Dorsolateral prefrontal cortex (tissue), 120 donors: ENCODE measurements at regions of chr13 and their contacts with region 1.

Region 1: DNA sequence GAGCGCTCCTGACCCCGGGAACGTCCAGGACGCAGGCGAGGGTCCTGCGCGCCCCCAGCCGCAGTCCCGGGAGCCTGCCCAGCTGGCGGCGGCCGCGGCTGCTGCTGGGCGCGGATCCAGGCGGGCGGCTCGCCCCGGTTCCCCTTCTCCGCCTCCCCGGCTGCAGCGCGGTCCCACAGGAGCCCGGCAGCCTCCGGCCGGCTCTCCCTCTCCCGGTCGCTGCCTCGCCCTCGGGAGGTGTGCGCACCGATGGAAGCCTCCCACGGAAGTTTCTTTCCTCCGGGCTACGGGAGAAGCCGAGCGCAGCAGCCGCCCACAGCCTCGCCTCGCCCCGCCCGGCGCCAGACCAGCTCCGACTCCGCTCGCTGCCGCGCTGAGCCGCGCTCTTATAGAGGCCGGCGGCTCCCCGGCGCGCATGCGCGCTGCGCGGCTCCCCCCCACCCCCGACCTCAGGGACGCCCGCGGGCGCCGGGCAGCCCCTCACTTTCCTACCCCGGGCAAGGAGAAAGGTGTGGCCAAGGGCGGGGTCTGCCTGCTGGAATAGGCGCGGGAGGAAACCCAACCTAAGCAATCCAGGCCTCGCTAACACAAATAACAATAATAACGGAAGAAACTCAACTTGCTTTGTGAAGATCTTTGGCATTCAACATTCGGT is at the start of gene SHISA2:
- DNase-seq: peak in 4 of 10 donors; percentile 36 to 64 (median 46)
- H3K4me3 ChIP-seq: peak within 1 kb of the TSS; percentile 33 to 76 (median 60)
- H3K27ac ChIP-seq: peak within 1 kb of the TSS in 47 of 59 donors; percentile 2 to 86 (median 69)
- H3K27me3 ChIP-seq: peaks cover 0 to 75% (median 34%) of the 10 kb centered on the region in 45 donors
- CTCF ChIP-seq: peak in 1 of 56 donors; percentile 14
- total RNA-seq, gene SHISA2: 0.18 to 7.1 (median 1.4) TPM

Region 2: DNA sequence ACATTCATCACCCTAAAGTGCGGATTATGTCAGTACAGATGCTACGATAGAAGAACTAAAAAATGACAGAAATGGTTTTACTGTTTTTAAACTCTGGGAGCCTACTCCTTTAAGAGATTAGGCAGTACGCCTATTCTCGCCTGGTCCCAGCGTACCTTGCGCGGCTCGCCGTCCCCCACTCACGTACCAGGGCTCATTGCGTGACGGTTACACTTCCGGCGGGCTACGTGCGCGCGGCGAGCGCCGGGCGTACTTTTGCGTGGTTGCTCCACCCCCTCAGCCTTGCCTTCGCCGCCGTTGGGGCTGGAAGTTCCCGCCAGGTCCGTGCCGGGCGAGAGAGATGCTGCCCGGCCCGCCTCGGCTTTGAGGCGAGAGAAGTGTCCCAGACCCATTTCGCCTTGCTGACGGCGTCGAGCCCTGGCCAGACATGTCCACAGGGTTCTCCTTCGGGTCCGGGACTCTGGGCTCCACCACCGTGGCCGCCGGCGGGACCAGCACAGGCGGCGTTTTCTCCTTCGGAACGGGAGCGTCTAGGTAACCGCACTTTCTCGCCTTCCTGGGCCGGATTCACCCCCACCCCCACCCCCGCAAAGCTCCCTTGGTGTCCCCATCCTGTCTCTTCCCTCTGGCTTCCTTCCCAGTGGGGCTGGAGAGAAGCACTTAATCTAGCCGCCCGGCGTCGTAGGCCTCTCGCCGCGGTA is 750.3 kb before region 1 on chr13 and contains the start of gene NUP58:
- intact Hi-C with region 1: loop called in 1 of 2 experiments (anchors 10 kb)
- DNase-seq: peak; percentile 95 to 98 (median 96)
- H3K4me3 ChIP-seq: peak within 1 kb of the TSS; percentile 59 to 99 (median 89)
- H3K27ac ChIP-seq: peak within 1 kb of the TSS; percentile 77 to 98 (median 93)
- H3K27me3 ChIP-seq: no peaks in the 10 kb centered on the region
- CTCF ChIP-seq: peak in 42 of 56 donors; percentile 5 to 65 (median 33)
- total RNA-seq, gene NUP58: 37.0 to 77.1 (median 58.6) TPM

Region 3: GRCh38 chr13:25977216-25977615 is 74.6 kb before region 1 on chr13:
- intact Hi-C with region 1: loop called in 1 of 2 experiments (anchors 10 kb)
- DNase-seq: no peak
- H3K4me3 ChIP-seq: no peak overlapping the region
- H3K27ac ChIP-seq: no peak overlapping the region
- H3K27me3 ChIP-seq: no peaks in the 10 kb centered on the region
- CTCF ChIP-seq: no peak

Region 4: DNA sequence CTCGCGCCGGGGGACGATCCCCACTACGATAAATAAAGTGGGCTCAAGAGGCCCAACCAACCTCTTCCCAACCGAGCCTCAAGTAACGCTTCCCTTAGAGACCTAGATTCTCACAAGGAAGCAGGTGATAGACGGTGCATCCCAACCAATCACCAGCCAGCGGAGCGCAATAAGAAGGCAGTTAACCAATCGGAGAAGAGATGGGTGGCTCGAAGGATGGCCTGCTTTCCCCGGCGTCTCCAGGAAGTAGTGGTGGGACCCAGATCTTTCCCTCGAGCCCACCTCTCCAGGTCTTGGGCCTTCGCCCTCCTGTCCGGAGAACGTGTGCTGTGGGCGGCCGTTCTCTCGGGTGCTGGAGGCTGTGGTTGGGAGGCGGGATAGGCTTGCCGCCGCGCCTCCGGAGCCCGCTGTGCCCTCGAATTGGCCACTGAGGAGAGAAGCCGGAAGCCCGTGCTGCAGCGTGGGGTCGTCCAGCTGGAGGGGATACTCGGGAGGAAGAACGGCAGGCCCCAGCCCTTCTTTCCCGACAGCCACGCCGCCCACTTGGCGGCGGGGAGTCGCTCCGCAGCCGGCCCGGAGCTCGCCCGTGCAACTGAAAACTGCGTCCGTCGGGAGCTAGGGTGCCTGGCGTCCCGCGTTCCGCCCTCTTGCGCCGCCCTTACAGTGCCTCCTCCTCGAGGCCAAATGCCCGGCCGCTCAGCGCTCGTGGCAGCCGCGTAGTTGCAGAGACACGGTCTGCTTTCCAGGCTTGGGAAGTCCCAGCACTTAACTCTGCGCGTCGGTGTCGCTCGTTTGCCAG is 170.1 kb after region 1 on chr13 and contains the start of gene RNF6:
- intact Hi-C with region 1: no loop called
- DNase-seq: peak; percentile 84 to 99 (median 95)
- H3K4me3 ChIP-seq: peak within 1 kb of the TSS; percentile 67 to 99 (median 91)
- H3K27ac ChIP-seq: peak within 1 kb of the TSS; percentile 65 to 99 (median 96)
- H3K27me3 ChIP-seq: no peaks in the 10 kb centered on the region
- CTCF ChIP-seq: peak in 45 of 56 donors; percentile 13 to 63 (median 35)
- total RNA-seq, gene RNF6: 25.4 to 76.6 (median 53.5) TPM